ENCODE measurements at regions of chr7 and their contacts with region 1.

Region 1: DNA sequence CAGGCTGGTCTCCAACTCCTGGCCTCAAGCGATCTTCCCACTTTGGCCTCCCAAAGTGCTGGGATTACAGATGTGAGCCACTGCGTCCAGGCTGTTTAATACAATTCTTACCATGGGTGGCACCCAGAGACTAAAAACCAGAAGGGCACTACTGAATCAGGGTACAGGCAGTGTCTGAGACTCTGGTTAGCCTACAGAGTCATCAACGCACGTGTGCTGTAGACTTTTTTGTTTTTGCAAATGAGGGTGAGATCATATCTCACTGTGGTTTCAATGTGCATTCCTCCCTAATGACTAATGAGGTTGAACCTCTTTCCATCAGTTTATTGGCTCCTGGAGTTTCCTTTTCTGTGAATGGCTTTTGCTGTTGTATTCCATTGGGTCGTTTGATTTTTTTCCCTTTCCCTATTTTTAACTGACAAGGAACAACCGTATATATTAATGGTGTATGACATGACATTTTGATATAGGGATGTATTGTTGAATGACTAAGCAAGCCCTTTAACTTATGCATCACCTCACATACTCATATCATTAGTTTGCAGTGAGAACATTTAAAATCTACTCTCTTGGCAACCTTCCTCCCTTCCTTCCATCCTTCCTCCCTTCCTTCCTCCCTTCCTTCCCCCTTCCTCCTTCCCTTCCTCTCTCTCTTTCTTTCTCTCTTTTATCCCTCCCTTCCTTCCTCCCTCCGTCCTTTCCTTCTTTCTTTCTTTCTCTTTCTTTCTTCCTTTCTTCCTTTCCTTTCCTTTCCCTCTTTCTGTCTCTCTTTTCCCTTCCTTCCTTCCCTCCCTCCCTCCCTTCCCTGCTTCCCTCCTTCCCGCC is 9.3 kb upstream of the METTL27 start:
- DNase-seq: no peak
- ATAC-seq: peak; percentile 43

Region 2: DNA sequence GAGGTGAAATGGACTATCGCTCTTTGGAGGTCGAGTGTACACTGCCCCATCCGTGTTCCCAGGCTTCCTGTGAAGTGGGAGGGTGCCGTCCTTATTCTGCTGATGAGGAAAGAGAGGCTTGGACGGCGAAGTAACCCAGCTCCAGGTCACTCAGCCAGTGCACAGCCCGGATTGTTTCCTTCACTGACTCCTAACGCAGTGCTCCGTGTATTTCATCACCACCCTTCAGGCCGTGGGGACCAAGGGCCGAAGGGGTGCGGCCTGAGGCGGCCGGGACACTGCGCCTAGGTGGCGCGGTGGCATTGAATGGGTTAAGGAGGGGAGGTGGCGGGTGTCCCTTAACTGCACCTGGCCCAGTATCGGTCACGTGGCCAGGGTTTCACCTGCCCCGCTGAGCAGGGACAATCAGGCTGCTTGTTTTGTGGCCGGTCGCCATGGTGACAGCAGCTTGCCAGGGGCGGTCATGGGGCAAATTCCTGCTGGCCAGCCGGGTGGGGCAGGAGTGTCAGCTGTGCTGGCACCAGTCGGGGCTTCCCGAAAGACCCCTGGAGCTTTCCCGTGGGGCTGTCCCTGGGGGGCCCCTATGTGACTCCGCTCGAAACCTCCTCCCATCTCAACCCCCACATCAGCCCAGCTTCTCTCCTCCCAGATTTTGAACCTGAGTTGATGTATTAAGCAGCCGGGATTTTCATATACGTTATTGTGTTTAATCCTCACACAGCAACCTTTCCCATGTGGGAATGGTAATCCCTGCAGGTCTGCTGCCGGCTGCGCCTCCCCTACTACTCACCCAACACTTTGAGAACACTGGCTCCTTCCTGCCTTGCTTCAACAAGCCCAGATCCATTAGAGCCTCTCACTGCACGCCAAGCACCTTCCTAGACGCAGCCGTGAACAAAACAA is 108.7 kb before region 1 on chr7:
- intact Hi-C with region 1: loop called in 1 of 2 experiments (anchors 10 kb)
- DNase-seq: peak; percentile 96 to 99
- ATAC-seq: peak; percentile 62

Region 3: DNA sequence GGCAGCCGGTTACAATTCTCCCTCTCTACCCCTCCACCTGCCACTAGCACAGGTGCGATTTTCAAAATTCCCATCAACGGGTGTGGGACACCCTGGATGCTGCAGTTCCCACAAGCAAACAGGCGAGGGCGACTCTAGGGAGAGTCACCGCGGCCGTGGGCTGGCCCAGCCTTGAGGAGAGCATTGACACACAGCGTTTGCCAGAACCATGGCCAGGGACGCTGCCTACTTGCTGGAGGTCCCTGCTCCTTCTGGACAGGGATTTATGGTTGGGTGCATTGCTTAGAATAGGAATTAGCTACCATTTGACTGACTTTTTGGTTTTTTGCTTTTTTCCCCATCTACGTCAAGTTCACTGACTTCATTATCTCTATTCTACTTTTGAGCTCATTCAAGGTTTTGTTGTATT is 39.9 kb before region 1 on chr7:
- intact Hi-C with region 1: loop called in 1 of 2 experiments (anchors 5 kb)
- DNase-seq: peak; percentile 78 to 83
- ATAC-seq: peak; percentile 64